AG04449 (cell line): ENCODE measurements at regions of chr15 and their contacts with region 1.

Region 1: GRCh38 chr15:48358229-48358641 is 27.0 kb downstream of the DUT start:
- DNase-seq: no peak
- H3K4me3 ChIP-seq: no peak overlapping the region
- CTCF ChIP-seq: peak; percentile 33

Region 2: DNA sequence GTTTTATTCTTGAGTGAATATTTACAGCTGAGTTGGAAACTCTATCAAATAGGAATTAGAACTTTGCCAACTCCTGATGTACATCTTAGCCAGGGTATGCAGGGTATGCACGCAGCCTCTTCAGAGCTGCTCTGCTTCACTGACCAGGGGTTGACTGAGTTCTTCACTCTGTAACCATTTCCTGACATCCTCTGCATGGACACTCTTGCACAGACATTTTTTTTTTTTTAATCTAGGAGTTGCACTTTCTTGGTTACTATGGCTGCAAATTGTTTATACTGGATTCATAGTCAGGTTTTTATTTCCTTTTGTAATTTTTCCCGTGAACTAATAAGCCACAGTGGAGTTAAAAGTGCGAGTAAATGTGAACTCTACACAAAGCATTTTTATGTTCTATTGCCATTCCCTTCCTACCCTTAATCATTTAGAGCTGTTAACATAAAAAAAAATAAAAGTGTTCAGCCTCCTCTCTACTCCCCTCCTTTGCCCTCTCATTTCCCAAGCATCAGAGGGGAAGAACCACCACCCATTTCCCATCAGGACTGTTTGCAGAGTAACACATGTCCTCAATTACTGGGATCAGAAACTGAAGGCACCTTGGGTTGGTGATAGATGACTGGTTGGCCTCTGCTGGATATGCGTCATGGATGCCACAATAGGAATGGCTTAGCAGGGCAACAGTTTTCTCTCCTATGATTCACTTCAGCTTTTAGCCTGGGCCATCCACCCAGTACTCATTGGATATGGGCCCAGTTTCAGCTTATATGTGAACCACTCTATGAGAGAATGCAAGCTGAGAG is 27.0 kb after region 1 on chr15:
- CTCF ChIA-PET with region 1: interaction called, 16 read pairs
- POLR2A ChIA-PET with region 1: no interaction called
- DNase-seq: peak; percentile 98
- H3K4me3 ChIP-seq: no peak overlapping the region
- CTCF ChIP-seq: no peak

Region 3: DNA sequence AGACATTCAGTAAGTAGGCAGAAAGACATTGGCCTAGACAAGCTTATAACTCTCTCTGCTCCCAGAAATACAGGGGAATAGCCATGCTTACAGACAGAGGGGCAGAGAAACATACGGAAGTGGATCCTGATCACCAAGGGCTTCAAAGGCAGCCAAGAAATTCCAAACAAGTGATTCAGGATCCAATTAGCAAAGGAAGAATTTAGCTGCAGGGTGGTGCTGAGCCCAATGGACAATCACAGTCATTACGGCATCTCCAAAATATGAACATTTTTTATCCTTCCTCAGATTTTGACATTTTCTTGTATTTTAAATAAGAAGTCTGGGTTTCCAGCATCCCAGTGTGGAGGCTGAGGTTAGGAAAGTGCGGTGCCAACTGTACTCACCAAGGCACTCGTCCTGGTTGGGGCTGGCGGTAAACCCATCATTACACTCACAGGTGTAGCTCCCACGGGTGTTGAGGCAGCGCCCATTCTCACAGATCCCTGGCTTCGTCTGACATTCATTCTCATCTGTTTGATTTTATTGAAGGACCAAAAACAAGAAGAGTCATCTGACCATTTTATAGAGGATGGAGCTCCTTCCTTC is 69.8 kb after region 1 on chr15:
- CTCF ChIA-PET with region 1: interaction called, 23 read pairs
- POLR2A ChIA-PET with region 1: no interaction called
- DNase-seq: peak; percentile 80
- H3K4me3 ChIP-seq: no peak overlapping the region
- CTCF ChIP-seq: no peak

Region 4: GRCh38 chr15:48451736-48452135 is 93.5 kb after region 1 on chr15:
- CTCF ChIA-PET with region 1: interaction called, 21 read pairs
- POLR2A ChIA-PET with region 1: no interaction called
- DNase-seq: no peak
- H3K4me3 ChIP-seq: no peak overlapping the region
- CTCF ChIP-seq: no peak

Region 5: DNA sequence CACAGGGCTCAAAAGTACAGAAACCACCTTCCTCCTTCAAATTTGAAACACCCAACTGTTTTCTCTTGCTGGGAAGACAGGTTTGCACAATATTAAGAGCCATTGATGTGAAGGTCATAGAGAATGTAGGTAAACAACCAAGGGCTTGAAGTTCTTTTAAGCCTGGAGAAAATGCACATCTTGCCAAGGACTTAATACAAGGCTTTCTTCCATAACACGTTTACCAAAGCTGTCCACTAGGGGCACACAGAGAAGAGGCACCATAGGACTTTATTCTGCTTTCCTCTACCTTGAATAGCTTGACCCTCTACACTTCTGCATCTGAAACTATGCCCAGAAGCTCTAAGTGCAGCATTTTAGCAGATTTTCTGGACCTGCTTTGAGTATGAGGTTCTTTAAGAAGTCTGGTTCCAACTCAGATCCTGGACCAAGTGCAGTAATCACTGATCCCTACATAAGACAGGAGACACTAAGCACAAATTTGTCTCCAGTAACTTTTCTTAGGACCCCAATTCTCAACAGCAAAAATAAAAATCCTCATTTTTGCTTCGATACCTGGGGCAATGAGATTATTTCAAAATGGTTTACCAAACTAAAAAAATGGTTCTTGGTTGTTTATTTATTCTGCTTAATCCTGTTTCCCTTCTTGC is 149.3 kb after region 1 on chr15:
- CTCF ChIA-PET with region 1: interaction called, 14 read pairs
- POLR2A ChIA-PET with region 1: no interaction called
- DNase-seq: no peak
- H3K4me3 ChIP-seq: no peak overlapping the region
- CTCF ChIP-seq: peak; percentile 57